WTC11 (cell line): ENCODE measurements at regions of chr9 and their contacts with region 1.

Region 1: GRCh38 chr9:120985810-120986222 is 59.2 kb upstream of the TRAF1 start:
- DNase-seq: no peak
- ATAC-seq: peak; percentile 78
- H3K4me3 Mint-ChIP-seq: no peak overlapping the region
- H3K27ac Mint-ChIP-seq: no peak overlapping the region
- H3K4me1 Mint-ChIP-seq: peaks cover 4% of the 10 kb centered on the region
- H3K27me3 Mint-ChIP-seq: no peaks in the 10 kb centered on the region; the same call in 1 of the 2 replicates
- CTCF ChIP-seq: peak; percentile 30; the same call in 1 of the 2 replicates

Region 2: GRCh38 chr9:120755827-120756434 is 229.9 kb before region 1 on chr9:
- CTCF ChIA-PET with region 1: interaction called, 14 read pairs
- POLR2A ChIA-PET with region 1: no interaction called
- DNase-seq: peak; percentile 67
- ATAC-seq: peak; percentile 74
- H3K4me3 Mint-ChIP-seq: no peak overlapping the region
- H3K27ac Mint-ChIP-seq: no peak overlapping the region
- H3K4me1 Mint-ChIP-seq: no peaks in the 10 kb centered on the region
- H3K27me3 Mint-ChIP-seq: no peaks in the 10 kb centered on the region
- CTCF ChIP-seq: peak; percentile 84

Region 3: DNA sequence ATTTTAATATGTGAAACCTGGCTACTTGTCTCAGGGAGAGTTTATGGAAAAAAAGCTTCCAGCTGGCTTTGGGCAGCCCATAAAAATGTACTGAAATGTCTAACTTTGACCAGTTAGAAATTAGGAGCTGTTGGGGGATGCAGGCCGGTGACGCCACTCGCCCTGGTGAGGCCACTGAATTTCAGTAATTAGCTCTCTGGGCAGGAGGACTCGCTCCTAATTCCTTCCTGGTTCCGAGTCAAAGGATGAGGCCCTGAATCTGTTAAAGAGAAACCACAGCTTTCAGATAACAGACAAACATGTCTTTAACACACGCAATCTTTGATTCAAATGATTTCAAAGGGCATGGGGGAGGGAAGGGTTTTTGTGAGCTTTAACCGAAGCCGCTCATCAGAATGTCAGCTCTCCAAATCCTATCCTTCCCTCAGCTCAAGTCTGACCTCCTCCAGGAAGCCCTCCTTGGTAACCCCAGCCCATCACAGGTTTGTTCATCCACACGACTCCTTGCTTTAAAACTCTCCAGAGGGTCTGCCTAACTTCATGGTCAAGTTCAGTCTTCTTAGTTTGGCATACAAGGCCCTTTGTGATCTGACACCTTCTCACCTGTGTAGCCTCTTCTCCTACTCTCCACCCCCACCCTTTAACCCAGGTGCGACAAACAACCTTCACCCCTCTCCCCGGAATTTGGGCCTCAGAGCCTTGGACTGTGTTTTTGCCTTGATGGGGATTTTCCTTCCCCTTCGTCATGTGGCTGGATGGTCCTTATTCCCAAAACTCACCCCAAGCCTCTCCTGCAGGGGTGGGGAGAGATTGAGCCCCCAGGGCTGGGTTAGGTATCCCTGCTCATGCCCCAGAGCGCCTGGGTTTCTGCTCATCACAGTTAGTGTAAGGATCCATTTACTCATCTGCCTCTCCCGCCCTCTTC is 95.2 kb before region 1 on chr9:
- CTCF ChIA-PET with region 1: interaction called, 10 read pairs
- POLR2A ChIA-PET with region 1: no interaction called
- DNase-seq: no peak
- ATAC-seq: no peak
- H3K4me3 Mint-ChIP-seq: no peak overlapping the region
- H3K27ac Mint-ChIP-seq: no peak overlapping the region
- H3K4me1 Mint-ChIP-seq: peaks cover 17% of the 10 kb centered on the region
- H3K27me3 Mint-ChIP-seq: peaks cover 30% of the 10 kb centered on the region
- CTCF ChIP-seq: no peak

Region 4: DNA sequence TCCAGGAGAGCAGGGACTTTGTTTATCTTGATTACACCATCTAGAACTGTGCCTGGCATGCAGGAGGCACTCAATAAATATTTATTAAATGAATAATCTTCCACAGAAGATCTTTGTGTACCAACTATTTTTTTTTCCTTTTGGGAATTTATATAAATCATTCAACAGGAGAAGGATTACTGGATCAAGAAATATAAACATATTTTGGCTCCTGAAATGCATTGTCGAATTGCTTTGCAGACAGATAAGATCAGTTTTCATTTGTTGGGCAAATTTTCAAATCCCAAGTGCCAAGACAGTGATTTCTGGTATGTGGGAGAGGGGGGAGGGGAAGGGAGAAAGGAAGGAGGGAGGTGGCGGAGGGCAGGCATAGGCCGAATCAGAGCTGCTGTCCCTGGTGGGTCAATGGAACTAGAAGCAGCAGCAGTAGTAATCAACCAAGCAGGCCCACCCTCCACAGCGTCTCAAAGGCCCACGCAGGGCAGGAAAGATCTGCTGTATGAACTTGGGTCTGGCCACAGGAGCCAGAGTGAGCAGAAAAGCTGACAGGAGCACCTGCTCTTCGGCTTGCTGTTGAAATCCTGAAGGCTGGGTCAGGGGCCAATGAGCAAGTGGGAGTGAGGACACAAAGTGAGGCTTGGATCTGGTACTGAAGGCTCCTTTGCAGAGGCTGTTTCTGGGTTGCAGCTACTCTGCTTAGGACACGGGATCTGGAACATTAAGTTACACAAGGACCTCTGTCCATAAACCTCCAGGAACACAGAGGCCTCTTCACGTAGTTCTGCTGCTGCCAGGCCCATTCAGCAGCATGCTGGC is 43.4 kb before region 1 on chr9:
- CTCF ChIA-PET with region 1: interaction called, 12 read pairs
- POLR2A ChIA-PET with region 1: no interaction called
- DNase-seq: peak; percentile 35
- ATAC-seq: peak; percentile 90
- H3K4me3 Mint-ChIP-seq: no peak overlapping the region
- H3K27ac Mint-ChIP-seq: no peak overlapping the region
- H3K4me1 Mint-ChIP-seq: peaks cover 38% of the 10 kb centered on the region
- H3K27me3 Mint-ChIP-seq: no peaks in the 10 kb centered on the region
- CTCF ChIP-seq: no peak

Region 5: GRCh38 chr9:120965344-120966012 is 20.3 kb before region 1 on chr9:
- CTCF ChIA-PET with region 1: interaction called, 21 read pairs
- POLR2A ChIA-PET with region 1: no interaction called
- DNase-seq: peak; percentile 34
- ATAC-seq: peak; percentile 81
- H3K4me3 Mint-ChIP-seq: no peak overlapping the region
- H3K27ac Mint-ChIP-seq: peak overlapping the region; percentile 35; the same call in 1 of the 2 replicates
- H3K4me1 Mint-ChIP-seq: peaks cover 29% of the 10 kb centered on the region
- H3K27me3 Mint-ChIP-seq: no peaks in the 10 kb centered on the region
- CTCF ChIP-seq: no peak

Region 6: DNA sequence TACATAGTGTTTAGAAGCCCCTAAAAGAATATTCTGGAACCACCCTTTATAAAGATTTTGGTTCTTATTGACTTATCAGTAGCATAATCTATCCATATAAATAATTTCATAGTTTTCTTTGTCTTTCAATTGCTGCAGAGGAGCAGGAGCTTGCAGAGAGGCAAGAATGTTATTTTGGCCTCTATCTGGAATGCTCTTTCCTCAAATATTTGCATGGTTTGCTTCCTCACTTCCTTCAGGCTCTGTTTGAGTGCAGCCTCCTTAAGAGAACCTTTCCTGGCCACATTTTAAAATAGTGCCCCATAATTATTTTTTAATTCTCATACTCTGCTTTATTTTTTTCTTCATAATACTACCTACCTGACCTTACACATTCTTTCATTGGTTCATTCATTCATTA is 62.8 kb after region 1 on chr9:
- CTCF ChIA-PET with region 1: interaction called, 12 read pairs
- POLR2A ChIA-PET with region 1: no interaction called
- DNase-seq: no peak
- ATAC-seq: no peak
- H3K4me3 Mint-ChIP-seq: no peak overlapping the region
- H3K27ac Mint-ChIP-seq: no peak overlapping the region
- H3K4me1 Mint-ChIP-seq: peaks cover 10% of the 10 kb centered on the region; the same call in 1 of the 2 replicates
- H3K27me3 Mint-ChIP-seq: no peaks in the 10 kb centered on the region
- CTCF ChIP-seq: no peak

Region 7: DNA sequence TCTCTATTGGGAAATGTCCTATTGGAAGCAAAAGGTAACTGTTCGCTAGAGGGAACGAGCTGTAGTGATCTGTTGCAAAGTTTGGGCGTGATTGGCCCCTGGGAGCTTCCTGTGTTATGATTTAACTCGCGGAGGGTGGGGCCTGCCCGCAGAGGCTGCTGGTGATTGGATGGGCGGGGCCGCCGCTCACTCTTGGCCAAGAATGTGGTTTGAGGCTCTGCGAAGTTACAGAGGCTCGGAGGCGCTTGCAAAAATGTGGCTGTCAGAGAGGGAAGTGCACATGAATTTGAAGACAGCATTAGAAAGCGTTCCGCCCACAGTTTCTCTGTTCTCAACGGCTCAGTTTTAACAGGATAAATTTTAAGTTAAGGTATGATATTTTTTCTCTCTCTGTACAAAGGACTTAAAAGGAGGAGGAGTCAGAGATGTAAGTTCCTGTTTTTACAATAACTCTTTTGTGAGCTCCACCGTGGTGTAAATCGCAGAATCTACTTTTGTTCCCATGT is 135.8 kb after region 1 on chr9:
- CTCF ChIA-PET with region 1: interaction called, 11 read pairs
- POLR2A ChIA-PET with region 1: no interaction called
- DNase-seq: peak; percentile 96
- ATAC-seq: peak; percentile 100
- H3K4me3 Mint-ChIP-seq: peak overlapping the region; percentile 74
- H3K27ac Mint-ChIP-seq: peak overlapping the region; percentile 39; the same call in 1 of the 2 replicates
- H3K4me1 Mint-ChIP-seq: peaks cover 15% of the 10 kb centered on the region
- H3K27me3 Mint-ChIP-seq: no peaks in the 10 kb centered on the region
- CTCF ChIP-seq: no peak

Region 8: DNA sequence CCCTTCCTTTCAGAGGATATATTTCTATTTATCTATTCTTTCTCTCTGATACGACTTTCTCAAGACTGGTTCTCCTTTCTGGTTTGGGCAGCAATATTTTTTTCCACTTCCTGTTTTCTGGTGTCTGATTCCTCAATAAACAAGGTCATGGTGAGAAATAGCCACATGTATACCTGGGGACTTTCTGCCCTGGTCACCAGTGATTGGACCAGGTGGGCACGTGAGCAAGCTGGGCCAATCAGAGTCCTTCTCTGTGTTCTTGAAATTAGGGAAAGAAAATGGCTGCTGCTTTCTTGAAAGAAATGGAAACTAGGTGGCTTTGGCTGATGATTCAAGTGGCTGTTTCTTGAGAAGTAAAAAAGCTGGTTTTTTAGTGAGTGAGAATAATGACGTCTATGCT is 263.7 kb after region 1 on chr9:
- CTCF ChIA-PET with region 1: no interaction called
- POLR2A ChIA-PET with region 1: no interaction called
- DNase-seq: no peak
- ATAC-seq: no peak
- H3K4me3 Mint-ChIP-seq: no peak overlapping the region
- H3K27ac Mint-ChIP-seq: no peak overlapping the region
- H3K4me1 Mint-ChIP-seq: peaks cover 13% of the 10 kb centered on the region
- H3K27me3 Mint-ChIP-seq: peaks cover 31% of the 10 kb centered on the region
- CTCF ChIP-seq: no peak